Left colon (tissue), 2 donors: ENCODE measurements at regions of chr11 and their contacts with region 1.

Region 1: DNA sequence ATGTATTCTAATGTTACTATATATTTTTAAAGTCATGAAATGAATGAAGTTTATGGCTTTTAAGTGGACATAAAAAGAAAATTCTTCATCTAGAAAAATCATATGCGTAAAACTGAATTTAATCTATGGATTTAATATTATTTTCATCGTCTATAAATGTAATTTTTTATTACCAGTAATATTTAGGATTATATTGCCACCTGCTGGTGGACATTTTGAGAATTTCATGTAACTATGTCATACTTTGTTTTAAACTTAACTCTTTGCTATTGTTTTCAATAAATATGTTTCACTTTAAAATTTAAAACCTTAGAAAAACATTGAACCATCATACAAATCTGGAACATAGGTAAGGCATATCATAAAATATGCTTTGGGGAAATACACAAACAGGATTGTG is 66.5 kb upstream of the CEP126 start:
- DNase-seq: no peak
- ATAC-seq: no peak

Region 2: GRCh38 chr11:101456812-101457211 is 391.4 kb before region 1 on chr11:
- intact Hi-C with region 1: loop called in 1 of 2 experiments (anchors 5 kb)
- DNase-seq: no peak
- ATAC-seq: no peak

Region 3: GRCh38 chr11:102367364-102367763 is 519.1 kb after region 1 on chr11:
- intact Hi-C with region 1: no loop called
- DNase-seq: no peak
- ATAC-seq: peak; percentile 72